Right cardiac atrium (tissue), 5 donors: ENCODE measurements at regions of chr4 and their contacts with region 1.

Region 1: GRCh38 chr4:127732613-127733328 is 2.6 kb downstream of the SLC25A31 start:
- DNase-seq: no peak
- ATAC-seq: peak in 1 of 2 donors; percentile 47
- H3K4me3 ChIP-seq: no peak overlapping the region
- H3K27ac ChIP-seq: no peak overlapping the region
- H3K4me1 ChIP-seq: no peaks in the 10 kb centered on the region
- H3K27me3 ChIP-seq: no peaks in the 10 kb centered on the region

Region 2: DNA sequence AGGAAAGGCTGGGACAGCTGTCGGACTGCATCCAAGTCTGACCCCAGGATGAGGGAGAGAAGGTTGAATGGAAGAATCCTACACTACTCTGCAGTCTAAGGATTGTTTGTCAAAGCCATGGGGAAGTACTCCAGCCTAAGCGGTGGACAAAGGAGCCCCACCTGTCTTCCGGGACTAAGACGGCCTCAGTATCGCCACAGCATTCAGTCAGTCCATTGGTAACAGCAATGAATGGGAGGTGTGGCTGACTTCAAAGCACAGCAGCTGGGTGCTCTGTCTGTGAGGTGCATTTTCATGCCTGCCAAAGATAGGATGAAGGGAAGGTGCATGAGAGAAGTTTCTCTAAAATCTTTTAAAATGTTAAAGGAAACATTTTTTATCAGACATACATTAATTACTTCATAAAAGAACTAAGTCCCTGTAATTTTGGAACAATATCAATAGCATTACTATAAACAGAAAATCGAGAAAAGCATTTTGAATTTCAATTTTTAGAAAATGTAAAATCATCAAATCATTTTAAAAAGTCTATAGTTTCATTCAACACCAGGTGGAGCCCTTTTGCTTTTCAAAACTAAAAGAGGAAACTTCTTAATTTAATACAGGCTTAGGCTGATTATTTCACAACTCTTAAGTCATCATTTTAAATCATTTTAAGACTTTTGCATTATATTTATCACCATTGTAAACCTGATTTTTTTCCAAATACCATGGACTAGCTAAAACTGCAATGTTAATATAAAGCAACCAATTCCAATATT is 127.6 kb before region 1 on chr4:
- intact Hi-C with region 1: loop called (anchors 2 to 5 kb)
- DNase-seq: no peak
- ATAC-seq: no peak
- H3K4me3 ChIP-seq: no peak overlapping the region
- H3K27ac ChIP-seq: no peak overlapping the region
- H3K4me1 ChIP-seq: no peaks in the 10 kb centered on the region
- H3K27me3 ChIP-seq: no peaks in the 10 kb centered on the region